Motor neuron (in vitro differentiated cells): ENCODE measurements at regions of chr1 and their contacts with region 1.

Region 1: GRCh38 chr1:112390775-112391602 is 5.0 kb upstream of the CTTNBP2NL start:
- ATAC-seq: peak; percentile 11 to 87 (median 78)
- H3K4me3 ChIP-seq: peak overlapping the region; percentile 20 to 36 (median 27)
- H3K27ac ChIP-seq: no peak overlapping the region
- H3K4me1 ChIP-seq: peaks cover 4 to 5% of the 10 kb centered on the region in 2 donors

Region 2: DNA sequence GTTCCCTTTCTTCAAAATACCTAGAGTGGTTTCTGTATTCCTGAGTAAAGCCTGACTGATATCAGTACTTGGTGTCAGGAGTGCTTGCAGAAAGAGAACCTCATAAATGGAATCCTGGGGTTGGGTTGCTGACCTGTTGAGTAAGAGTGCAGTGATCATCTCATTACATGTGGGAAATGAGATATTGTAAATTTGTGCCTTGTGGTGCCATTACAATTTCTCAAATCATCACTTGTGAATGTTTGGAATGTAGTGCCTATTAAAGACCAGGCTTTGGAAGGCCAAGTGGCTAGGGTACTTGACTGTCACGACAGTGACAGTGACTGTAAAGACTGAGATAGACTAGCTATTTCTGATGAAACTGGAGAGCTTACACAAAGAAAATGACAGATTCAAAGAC is 171.7 kb before region 1 on chr1:
- in situ Hi-C with region 1: no loop called
- ATAC-seq: no peak
- H3K4me3 ChIP-seq: no peak overlapping the region
- H3K27ac ChIP-seq: no peak overlapping the region
- H3K4me1 ChIP-seq: no peaks in the 10 kb centered on the region

Region 3: DNA sequence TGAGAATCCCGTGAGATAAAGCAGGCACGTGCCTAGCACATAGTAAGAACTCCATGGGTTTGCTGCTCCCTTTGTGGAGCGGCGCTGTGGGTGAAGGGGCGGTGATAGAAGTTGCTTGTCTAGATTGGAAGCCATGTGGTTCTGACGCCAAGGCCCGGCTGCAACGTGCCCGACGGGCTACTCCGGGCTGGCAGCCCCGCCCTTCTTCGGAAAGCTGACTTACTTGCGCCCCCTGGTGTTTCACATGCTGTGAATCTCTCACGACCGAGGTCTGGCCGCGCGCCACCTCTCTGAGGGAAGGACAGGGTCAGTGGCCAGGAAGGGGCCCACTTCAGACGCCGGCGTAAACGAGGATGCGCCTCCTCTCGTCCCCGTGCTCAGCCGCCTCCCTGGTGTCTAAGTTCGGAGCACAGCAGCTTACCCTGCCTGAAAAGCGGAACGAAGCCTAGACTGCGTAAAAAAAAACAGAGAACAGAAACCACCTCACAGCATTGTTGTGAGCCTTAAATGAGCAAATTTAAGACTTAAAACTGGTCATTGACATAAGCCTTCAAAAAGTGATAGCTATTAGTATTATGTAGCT is 75.2 kb after region 1 on chr1:
- in situ Hi-C with region 1: loop called in 1 of 9 experiments (anchors 10 kb)
- ATAC-seq: peak; percentile 85 to 98 (median 98)
- H3K4me3 ChIP-seq: peak overlapping the region; percentile 8 to 21 (median 12)
- H3K27ac ChIP-seq: no peak overlapping the region
- H3K4me1 ChIP-seq: peaks cover 0 to 7% of the 10 kb centered on the region in 2 donors

Region 4: DNA sequence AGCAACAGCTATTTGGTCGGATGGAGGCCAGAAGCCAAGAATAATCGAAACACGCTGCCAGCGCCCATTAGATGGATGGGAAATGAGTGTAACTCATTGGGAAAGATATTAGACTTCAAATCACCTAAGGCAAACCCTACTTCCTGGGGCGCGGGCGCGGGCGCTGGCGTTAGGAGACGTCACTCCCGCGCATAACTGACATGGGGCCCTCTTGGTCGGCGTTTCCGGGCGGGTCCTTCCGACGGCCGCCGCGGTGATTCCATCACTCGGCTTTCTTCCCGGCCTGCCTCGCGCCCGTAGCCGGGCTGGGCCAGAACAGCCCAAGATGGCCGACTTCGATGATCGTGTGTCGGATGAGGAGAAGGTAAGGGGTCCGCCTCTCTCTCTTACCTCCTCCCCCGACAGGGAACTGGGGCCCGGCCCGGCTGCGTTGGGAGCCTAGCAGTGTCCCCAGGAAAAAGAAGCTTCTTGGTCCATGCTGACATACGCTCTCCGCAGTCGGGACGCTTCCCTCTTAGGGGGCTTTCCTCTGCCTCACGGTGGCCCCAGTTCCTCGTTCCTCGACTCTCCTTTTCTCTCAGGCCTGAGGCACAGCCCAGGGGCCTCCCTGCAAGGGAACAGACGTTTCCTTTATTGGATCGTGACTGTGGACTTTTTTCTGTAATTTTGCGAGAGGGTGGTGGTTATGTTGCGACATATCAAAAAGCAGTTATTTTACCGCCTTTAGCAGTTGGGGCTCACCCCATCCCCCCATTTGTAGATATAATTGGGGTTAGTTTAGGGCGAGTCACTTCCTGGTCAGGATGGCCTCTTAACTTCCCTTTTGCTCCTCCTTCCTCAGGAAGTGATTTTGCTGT is 228.8 kb after region 1 on chr1 and contains the start of gene CAPZA1:
- in situ Hi-C with region 1: loop called in 2 of 9 experiments (anchors 10 to 25 kb)
- ATAC-seq: peak; percentile 84 to 96 (median 95)
- H3K4me3 ChIP-seq: peak within 1 kb of the TSS; percentile 84 to 97 (median 94)
- H3K27ac ChIP-seq: peak within 1 kb of the TSS; percentile 95 to 98
- H3K4me1 ChIP-seq: peaks cover 18 to 24% of the 10 kb centered on the region in 2 donors
- total RNA-seq, gene CAPZA1: 119 to 210 (median 162) TPM

Region 5: DNA sequence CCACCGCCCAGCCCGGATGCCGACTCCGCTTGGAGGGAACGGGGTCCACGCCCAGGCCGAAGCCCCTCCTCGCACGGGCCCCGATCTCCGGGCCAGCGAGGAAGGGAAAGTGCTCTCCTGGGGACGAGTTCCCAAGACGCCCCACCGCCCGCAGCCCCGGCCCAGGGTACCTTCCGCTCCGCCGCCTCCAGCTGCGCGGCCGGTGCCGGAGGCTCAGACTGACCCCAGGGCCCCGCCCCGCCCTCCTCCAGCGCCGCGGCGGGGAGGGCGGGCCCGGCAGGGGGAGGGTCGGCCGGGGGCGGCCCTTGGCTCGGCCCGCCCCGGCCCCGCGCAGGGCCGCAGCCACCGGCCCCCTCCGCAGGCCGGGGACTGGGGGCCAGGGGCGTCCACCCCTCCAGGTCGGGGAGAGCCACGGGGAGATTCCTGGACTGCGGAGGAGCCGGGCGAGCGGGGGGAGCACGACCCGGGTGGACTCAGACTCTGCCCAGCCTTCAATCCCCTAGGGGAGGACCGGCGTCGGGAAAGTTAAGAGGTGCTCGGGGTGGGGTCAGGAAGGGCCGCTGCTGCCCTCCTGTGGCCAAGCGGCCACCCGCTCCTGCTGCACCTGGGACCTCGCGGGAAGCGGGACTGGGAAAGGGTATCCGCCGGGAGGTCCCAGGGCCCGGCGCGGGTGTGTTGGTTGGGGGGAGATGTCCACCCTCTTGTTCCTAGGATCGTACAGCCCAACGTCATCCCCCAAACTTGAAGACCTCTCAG is 316.1 kb after region 1 on chr1 and contains the start of gene RHOC:
- in situ Hi-C with region 1: loop called in 3 of 9 experiments (anchors 10 to 25 kb)
- ATAC-seq: peak; percentile 52 to 80 (median 72)
- H3K4me3 ChIP-seq: peak within 1 kb of the TSS; percentile 40 to 81 (median 47)
- H3K27ac ChIP-seq: peak within 1 kb of the TSS in 1 of 2 donors; percentile 30
- H3K4me1 ChIP-seq: peaks cover 21% of the 10 kb centered on the region in 2 donors
- total RNA-seq, gene RHOC: 57.4 to 468 (median 89.6) TPM